ENCODE measurements at regions of chr11 and their contacts with region 1.

Region 1: DNA sequence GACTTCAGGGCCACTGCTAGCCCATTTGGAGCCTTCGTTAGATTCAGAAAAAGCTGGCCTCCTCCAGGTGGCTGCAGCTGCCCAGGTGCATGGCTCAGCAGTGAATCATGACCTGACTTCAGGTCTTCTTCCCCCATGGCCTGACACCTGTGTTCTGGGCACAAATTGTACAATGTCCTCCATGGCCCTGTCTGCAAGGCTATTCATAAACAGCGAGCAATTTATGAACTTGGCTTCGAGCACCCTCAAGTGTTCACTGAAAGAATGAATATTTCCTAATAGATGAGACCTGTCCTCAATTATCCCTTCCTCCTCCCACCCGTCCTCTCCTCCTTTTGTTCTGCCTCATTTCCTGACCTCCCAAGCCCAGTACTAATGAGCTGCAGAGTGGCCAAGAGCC is 12.2 kb upstream of the VPS37C start:
- DNase-seq: peak; percentile 41
- ATAC-seq: peak; percentile 86
- H3K4me3 ChIP-seq: no peak overlapping the region
- H3K27ac ChIP-seq: no peak overlapping the region
- H3K4me1 ChIP-seq: no peaks in the 10 kb centered on the region
- H3K27me3 ChIP-seq: peaks cover 1 to 37% of the 10 kb centered on the region in 2 experiments; a peak in 2 of 5 replicates
- CTCF ChIP-seq: peak; percentile 69
- EP300 ChIP-seq: no peak
- POLR2A ChIP-seq: no peak
- RAD21 ChIP-seq: peak; percentile 51; the same call in 1 of the 2 replicates

Region 2: GRCh38 chr11:60899046-60899936 is 274.2 kb before region 1 on chr11:
- CTCF ChIA-PET with region 1: no interaction called
- POLR2A ChIA-PET with region 1: no interaction called
- in situ Hi-C with region 1: no loop called
- intact Hi-C with region 1: loop called (anchors 1 kb)
- DNase-seq: peak; percentile 56
- ATAC-seq: peak; percentile 83
- H3K4me3 ChIP-seq: no peak overlapping the region
- H3K27ac ChIP-seq: no peak overlapping the region
- H3K4me1 ChIP-seq: peaks cover 8% of the 10 kb centered on the region
- H3K27me3 ChIP-seq: no peaks in the 10 kb centered on the region
- CTCF ChIP-seq: peak; percentile 86
- EP300 ChIP-seq: no peak
- POLR2A ChIP-seq: 0 out of 4 replicates have a peak, but pooled peaks of 1 of the 2 experiments have one; percentile 22
- RAD21 ChIP-seq: peak; percentile 51

Region 3: DNA sequence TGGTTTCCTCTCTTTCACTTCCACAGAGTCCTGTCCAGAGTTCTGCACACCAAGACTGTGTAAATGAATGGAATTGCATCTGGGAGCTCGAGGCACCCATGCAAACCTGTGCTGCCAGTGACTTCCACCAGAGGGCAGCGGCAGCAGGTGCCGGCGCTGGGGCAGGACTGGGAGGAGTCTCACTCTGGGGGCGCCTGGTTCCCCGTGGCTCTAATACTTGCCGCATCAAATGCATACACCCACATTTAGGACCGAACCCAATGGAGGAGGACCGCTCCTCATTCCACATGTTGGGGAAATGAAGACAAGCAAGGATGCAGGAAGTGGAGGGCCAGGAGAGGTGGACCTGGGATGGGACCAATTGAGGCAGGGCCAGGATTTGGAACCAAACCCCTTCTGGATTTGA is 203.1 kb before region 1 on chr11:
- CTCF ChIA-PET with region 1: interaction called, 11 read pairs
- POLR2A ChIA-PET with region 1: no interaction called
- in situ Hi-C with region 1: no loop called
- intact Hi-C with region 1: loop called (anchors 1 kb)
- DNase-seq: peak; percentile 16
- ATAC-seq: peak; percentile 89
- H3K4me3 ChIP-seq: no peak overlapping the region
- H3K27ac ChIP-seq: no peak overlapping the region
- H3K4me1 ChIP-seq: no peaks in the 10 kb centered on the region
- H3K27me3 ChIP-seq: peaks cover 7 to 65% of the 10 kb centered on the region in 2 experiments; a peak in 4 of 5 replicates
- CTCF ChIP-seq: peak; percentile 82
- EP300 ChIP-seq: no peak
- POLR2A ChIP-seq: no peak
- RAD21 ChIP-seq: peak; percentile 71

Region 4: GRCh38 chr11:61129639-61130523 is 43.6 kb before region 1 on chr11:
- CTCF ChIA-PET with region 1: interaction called, 49 read pairs
- POLR2A ChIA-PET with region 1: no interaction called
- in situ Hi-C with region 1: no loop called
- intact Hi-C with region 1: loop called (anchors 1 kb)
- DNase-seq: peak; percentile 82
- ATAC-seq: peak; percentile 90
- H3K4me3 ChIP-seq: no peak overlapping the region; a peak in 1 of 6 replicates
- H3K27ac ChIP-seq: no peak overlapping the region
- H3K4me1 ChIP-seq: peaks cover 6% of the 10 kb centered on the region
- H3K27me3 ChIP-seq: peaks cover 1 to 13% of the 10 kb centered on the region in 2 experiments; a peak in 4 of 5 replicates
- CTCF ChIP-seq: peak; percentile 100
- EP300 ChIP-seq: no peak; a peak in 1 of 4 replicates
- POLR2A ChIP-seq: no peak
- RAD21 ChIP-seq: peak; percentile 99

Measured in HepG2 (cell line).